ENCODE measurements at regions of chr20 and their contacts with region 1.

Region 1: GRCh38 chr20:32285621-32286371 is 8.3 kb downstream of the KIF3B start:
- DNase-seq: no peak
- ATAC-seq: no peak
- H3K4me3 ChIP-seq: no peak overlapping the region
- H3K27ac ChIP-seq: peak overlapping the region; percentile 20
- H3K4me1 ChIP-seq: peaks cover 64% of the 10 kb centered on the region
- H3K27me3 ChIP-seq: no peaks in the 10 kb centered on the region
- CTCF ChIP-seq: no peak
- EP300 ChIP-seq: no peak
- POLR2A ChIP-seq: no peak
- RAD21 ChIP-seq: no peak

Region 2: GRCh38 chr20:31712564-31713311 is 573.1 kb before region 1 on chr20:
- CTCF ChIA-PET with region 1: no interaction called
- POLR2A ChIA-PET with region 1: no interaction called
- in situ Hi-C with region 1: no loop called
- intact Hi-C with region 1: no loop called
- DNase-seq: peak; percentile 95
- ATAC-seq: peak; percentile 61
- H3K4me3 ChIP-seq: peak overlapping the region in 2 of 3 experiments; percentile 2 to 29; a peak in 2 of 6 replicates
- H3K27ac ChIP-seq: peak overlapping the region; percentile 61
- H3K4me1 ChIP-seq: peaks cover 99% of the 10 kb centered on the region
- H3K27me3 ChIP-seq: no peaks in the 10 kb centered on the region
- CTCF ChIP-seq: no peak
- EP300 ChIP-seq: peak in 1 of 2 experiments; percentile 92; a peak in 3 of 4 replicates
- POLR2A ChIP-seq: peak in 1 of 2 experiments; percentile 39; a peak in 1 of 4 replicates
- RAD21 ChIP-seq: no peak

Region 3: DNA sequence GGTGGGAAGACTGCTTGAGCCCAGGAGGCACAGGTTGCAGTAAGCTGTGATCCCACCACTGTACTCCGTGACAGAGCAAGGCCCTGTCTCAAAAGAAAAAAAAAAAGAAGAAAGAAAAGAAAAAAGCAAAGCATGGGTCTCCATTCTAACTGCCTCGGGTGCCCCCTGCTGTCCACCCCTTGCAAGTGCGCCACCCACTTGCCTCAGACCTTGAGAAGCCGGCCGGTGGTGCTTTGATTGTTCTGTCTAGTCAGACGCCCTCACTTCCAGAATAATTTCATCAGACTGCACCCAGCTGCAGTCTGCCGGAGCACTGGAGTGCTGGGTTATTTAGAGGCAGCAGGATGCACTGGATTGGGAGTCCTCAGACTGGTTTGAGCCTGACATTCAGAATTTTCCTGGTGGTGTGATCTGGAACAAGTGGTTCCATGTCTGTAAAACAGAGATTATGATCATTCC is 193.9 kb before region 1 on chr20:
- CTCF ChIA-PET with region 1: no interaction called
- POLR2A ChIA-PET with region 1: no interaction called
- in situ Hi-C with region 1: no loop called
- intact Hi-C with region 1: no loop called
- DNase-seq: peak; percentile 82
- ATAC-seq: peak; percentile 88
- H3K4me3 ChIP-seq: no peak overlapping the region
- H3K27ac ChIP-seq: no peak overlapping the region
- H3K4me1 ChIP-seq: 0 out of 2 replicates have a peak, but pooled peaks cover 4% of the 10 kb centered on the region
- H3K27me3 ChIP-seq: peaks cover 7 to 32% of the 10 kb centered on the region in 2 experiments; a peak in 4 of 5 replicates
- CTCF ChIP-seq: peak; percentile 92
- EP300 ChIP-seq: no peak
- POLR2A ChIP-seq: no peak
- RAD21 ChIP-seq: peak; percentile 57; the same call in 1 of the 2 replicates

Region 4: DNA sequence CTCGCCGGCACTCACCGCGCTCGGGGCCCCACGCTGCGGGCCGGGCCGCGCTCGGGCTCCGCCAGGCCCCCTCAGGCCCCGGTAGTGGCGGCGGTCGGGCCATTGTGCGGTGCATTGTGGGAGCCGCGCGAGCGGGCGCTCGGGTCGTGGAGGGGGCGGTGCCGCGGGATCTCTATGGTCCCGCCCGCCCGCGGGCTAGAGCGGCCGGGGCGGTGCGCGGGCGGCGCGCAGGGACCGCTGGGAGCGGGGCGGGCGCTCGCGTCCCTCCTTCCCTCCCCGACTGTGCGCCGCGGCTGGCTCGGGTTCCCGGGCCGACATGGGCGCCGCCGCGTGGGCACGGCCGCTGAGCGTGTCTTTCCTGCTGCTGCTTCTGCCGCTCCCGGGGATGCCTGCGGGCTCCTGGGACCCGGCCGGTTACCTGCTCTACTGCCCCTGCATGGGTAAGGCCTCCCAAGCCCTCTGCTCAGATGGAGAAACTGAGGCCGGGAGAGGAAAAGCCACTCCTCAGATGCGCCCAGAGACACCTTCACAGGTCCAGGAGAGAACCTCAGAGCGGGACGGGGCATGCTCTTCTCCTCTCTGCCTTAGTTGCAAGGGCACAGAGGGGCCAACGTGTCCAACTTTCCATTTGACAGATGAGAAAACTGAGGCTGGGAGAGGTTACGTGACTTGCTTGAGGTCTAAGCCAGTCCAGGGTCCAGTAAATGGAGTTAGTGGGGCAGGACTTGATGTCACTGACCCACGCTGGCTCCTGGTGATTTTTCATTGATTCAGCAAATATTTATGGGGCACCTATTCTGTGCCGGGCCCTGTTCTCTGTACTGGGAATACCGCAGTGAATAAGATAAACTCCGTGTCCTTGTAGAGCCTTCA is 77.9 kb before region 1 on chr20 and contains the starts of genes PLAGL2 and POFUT1:
- CTCF ChIA-PET with region 1: no interaction called
- POLR2A ChIA-PET with region 1: interaction called, 5 read pairs
- in situ Hi-C with region 1: no loop called
- intact Hi-C with region 1: loop called (anchors 5 kb)
- DNase-seq: peak; percentile 82
- ATAC-seq: peak; percentile 96
- H3K4me3 ChIP-seq: peak within 1 kb of the TSS; percentile 91 to 99 (median 94)
- H3K27ac ChIP-seq: peak within 1 kb of the TSS; percentile 76
- H3K4me1 ChIP-seq: peaks cover 74% of the 10 kb centered on the region
- H3K27me3 ChIP-seq: peaks cover 0 to 7% of the 10 kb centered on the region in 2 experiments; a peak in 1 of 5 replicates
- CTCF ChIP-seq: peak; percentile 74
- EP300 ChIP-seq: peak; percentile 40 to 66; a peak in 1 of 4 replicates
- POLR2A ChIP-seq: peak; percentile 92 to 96
- RAD21 ChIP-seq: peak; percentile 93
- total RNA-seq, gene PLAGL2: 15.3 and 26.5 TPM in 2 replicates
- total RNA-seq, gene POFUT1: 30.2 and 58.3 TPM in 2 replicates

Region 5: DNA sequence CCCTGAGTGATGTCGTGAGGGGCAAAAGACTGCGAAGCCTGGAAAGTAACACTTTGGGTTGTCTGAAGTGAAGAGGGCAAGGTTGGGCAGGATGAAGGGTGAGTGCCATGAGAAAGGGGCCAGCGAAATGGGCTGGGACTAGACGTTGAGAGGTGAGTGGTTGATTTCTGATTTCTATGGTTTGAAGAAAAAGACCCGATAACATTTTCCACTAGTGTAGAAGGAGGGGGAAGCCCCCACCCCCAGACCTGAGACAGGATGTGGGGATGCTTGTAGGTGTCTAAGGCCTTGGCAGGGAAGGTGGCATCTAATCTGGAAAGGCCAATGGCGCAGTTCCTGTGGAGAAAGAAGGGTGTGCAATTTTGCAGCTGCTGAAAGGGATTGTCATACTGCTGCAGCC is 33.6 kb before region 1 on chr20:
- CTCF ChIA-PET with region 1: no interaction called
- POLR2A ChIA-PET with region 1: interaction called, 23 read pairs
- in situ Hi-C with region 1: no loop called
- intact Hi-C with region 1: no loop called
- DNase-seq: no peak
- ATAC-seq: no peak
- H3K4me3 ChIP-seq: no peak overlapping the region
- H3K27ac ChIP-seq: no peak overlapping the region
- H3K4me1 ChIP-seq: peaks cover 46% of the 10 kb centered on the region
- H3K27me3 ChIP-seq: no peaks in the 10 kb centered on the region
- CTCF ChIP-seq: no peak
- EP300 ChIP-seq: no peak
- POLR2A ChIP-seq: no peak
- RAD21 ChIP-seq: no peak

Region 6: GRCh38 chr20:32297439-32297838 is 11.6 kb after region 1 on chr20:
- CTCF ChIA-PET with region 1: no interaction called
- POLR2A ChIA-PET with region 1: interaction called, 39 read pairs
- in situ Hi-C with region 1: no loop called
- intact Hi-C with region 1: no loop called
- DNase-seq: no peak
- ATAC-seq: no peak
- H3K4me3 ChIP-seq: no peak overlapping the region
- H3K27ac ChIP-seq: peak overlapping the region; percentile 6
- H3K4me1 ChIP-seq: peaks cover 71% of the 10 kb centered on the region
- H3K27me3 ChIP-seq: no peaks in the 10 kb centered on the region
- CTCF ChIP-seq: no peak
- EP300 ChIP-seq: no peak
- POLR2A ChIP-seq: no peak
- RAD21 ChIP-seq: no peak

Region 7: DNA sequence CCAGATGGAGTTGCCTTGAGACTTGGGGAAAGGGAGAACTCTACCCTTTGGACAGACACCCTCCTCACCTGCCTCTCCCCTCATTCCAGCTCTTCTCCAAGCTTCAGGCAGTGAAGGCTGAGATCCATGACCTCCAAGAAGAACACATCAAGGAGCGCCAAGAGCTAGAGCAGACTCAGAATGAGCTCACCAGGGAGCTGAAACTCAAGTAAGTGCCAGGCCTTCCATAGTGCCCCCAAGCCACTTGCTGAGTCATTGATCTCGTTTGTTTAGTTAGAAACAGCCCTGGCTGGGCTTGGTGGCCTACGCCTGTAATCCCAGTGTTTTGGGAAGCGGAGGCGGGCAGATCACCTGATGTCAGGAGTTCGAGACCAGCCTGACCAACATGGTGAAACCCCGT is 30.9 kb after region 1 on chr20:
- CTCF ChIA-PET with region 1: no interaction called
- POLR2A ChIA-PET with region 1: interaction called, 24 read pairs
- in situ Hi-C with region 1: no loop called
- intact Hi-C with region 1: no loop called
- DNase-seq: no peak
- ATAC-seq: no peak
- H3K4me3 ChIP-seq: no peak overlapping the region
- H3K27ac ChIP-seq: no peak overlapping the region
- H3K4me1 ChIP-seq: peaks cover 36% of the 10 kb centered on the region
- H3K27me3 ChIP-seq: no peaks in the 10 kb centered on the region
- CTCF ChIP-seq: no peak
- EP300 ChIP-seq: no peak
- POLR2A ChIP-seq: no peak
- RAD21 ChIP-seq: no peak

Region 8: DNA sequence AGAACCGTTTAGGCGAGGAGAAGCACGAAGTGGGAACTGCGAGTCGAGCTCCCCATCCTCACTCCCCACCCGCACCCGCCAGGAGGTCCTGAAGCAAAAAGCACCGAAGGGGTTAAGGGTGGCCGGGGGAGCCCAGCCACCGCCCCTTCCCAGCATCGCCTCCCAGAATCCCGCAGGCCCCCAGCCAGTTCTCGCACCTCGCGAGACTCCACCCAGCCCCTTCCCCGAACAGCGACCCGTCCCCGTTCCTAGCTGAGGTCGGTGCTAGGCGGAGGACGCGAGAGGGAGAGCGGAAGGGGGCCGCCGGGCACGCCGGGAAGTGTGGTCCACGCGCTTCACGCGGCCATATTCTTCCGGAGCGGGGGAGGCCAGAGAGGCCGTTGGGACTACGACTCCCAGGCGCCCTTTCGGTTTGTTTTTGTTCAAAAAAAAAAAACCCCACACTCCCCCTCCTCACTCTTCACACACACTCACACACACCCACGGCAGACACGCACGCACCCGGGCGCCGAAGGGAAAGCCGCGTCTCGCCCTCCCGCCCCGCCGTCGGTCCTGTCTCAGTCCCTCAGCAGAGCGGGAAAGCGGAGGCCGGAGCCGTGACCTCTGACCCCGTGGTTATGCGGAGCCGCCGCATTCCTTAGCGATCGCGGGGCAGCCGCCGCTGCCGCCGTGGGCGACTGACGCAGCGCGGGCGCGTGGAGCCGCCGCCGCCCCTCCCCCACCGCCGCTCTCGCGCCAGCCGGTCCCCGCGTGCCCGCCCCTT is 72.3 kb after region 1 on chr20 and contains the start of gene ASXL1:
- CTCF ChIA-PET with region 1: no interaction called
- POLR2A ChIA-PET with region 1: interaction called, 23 read pairs
- in situ Hi-C with region 1: no loop called
- intact Hi-C with region 1: no loop called
- DNase-seq: peak; percentile 99
- ATAC-seq: peak; percentile 92
- H3K4me3 ChIP-seq: peak within 1 kb of the TSS; percentile 79 to 95 (median 89)
- H3K27ac ChIP-seq: peak within 1 kb of the TSS; percentile 85
- H3K4me1 ChIP-seq: peaks cover 70% of the 10 kb centered on the region
- H3K27me3 ChIP-seq: no peaks in the 10 kb centered on the region; a peak in 1 of 5 replicates
- CTCF ChIP-seq: peak; percentile 56
- EP300 ChIP-seq: peak; percentile 66 to 82
- POLR2A ChIP-seq: peak; percentile 47 to 82
- RAD21 ChIP-seq: peak; percentile 49
- total RNA-seq, gene ASXL1: 47.3 and 62.1 TPM in 2 replicates

Measured in HepG2 (cell line).